Psoas muscle (tissue), 8 donors: ENCODE measurements at regions of chr3 and their contacts with region 1.

Region 1: GRCh38 chr3:4712143-4712542 is 219.0 kb downstream of the ITPR1 start:
- DNase-seq: no peak
- ATAC-seq: peak in 2 of 4 donors; percentile 7 to 36
- H3K4me3 ChIP-seq: no peak overlapping the region
- H3K27ac ChIP-seq: no peak overlapping the region
- H3K4me1 ChIP-seq: peaks cover 3% of the 10 kb centered on the region
- H3K27me3 ChIP-seq: no peaks in the 10 kb centered on the region
- CTCF ChIP-seq: no peak

Region 2: GRCh38 chr3:4978204-4978965 is 266.2 kb after region 1 on chr3:
- intact Hi-C with region 1: loop called in 1 of 2 experiments (anchors 2 kb)
- DNase-seq: peak; percentile 98
- ATAC-seq: peak; percentile 63 to 75 (median 70)
- H3K4me3 ChIP-seq: peak overlapping the region; percentile 99
- H3K27ac ChIP-seq: peak overlapping the region; percentile 100
- H3K4me1 ChIP-seq: peaks cover 17% of the 10 kb centered on the region
- H3K27me3 ChIP-seq: no peaks in the 10 kb centered on the region
- CTCF ChIP-seq: no peak

Region 3: DNA sequence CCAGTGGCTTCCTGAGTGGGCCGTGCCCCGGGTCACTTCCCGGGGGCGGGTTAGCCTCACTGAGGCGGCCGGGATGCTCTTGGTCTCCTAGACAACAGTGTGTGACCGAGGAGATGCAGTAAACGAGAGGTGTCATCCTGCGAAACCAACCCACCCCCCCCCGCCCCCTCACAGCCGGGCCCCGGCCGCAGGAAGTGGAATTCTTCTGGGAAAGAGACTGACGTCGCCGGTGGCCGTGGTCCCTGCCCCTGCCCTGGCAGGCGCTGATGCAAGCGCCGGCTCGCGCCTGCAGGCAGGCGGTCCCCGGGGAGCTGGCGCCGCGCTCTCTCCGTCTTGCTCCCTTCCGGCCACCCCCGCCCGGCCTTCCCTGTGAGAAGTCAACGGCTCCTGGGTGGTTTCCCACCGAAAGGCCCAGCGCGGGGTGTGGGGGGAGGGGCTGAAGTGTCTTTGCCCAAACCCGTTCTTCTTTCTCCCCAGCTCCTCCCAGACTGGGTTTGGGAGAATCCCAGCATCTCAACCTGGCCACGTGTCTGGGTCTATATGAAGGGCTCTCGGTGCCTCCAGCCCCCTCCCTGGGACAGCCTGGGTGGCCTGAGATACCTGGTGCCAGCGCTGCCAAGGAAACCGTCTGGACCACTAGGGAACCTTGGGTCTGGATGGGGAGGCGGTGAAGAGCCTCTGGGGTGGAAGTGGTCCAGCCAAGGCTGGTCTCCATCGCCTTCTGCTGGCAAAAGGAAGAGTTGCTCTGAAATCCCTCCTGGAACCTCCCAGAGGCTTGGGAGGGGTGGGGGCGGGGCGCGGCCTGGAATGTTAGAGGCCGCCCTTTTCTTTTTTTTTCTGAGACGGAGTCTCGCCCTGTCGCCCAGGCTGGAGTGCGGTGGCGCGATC is 314.4 kb after region 1 on chr3:
- intact Hi-C with region 1: loop called (anchors 5 to 10 kb)
- DNase-seq: peak; percentile 92 to 93
- ATAC-seq: peak; percentile 77 to 94 (median 82)
- H3K4me3 ChIP-seq: peak overlapping the region; percentile 63
- H3K27ac ChIP-seq: peak overlapping the region; percentile 80
- H3K4me1 ChIP-seq: peaks cover 6% of the 10 kb centered on the region
- H3K27me3 ChIP-seq: no peaks in the 10 kb centered on the region
- CTCF ChIP-seq: peak; percentile 57

Region 4: GRCh38 chr3:5057857-5058324 is 345.7 kb after region 1 on chr3:
- intact Hi-C with region 1: loop called (anchors 1 to 2 kb)
- DNase-seq: peak; percentile 63 to 77
- ATAC-seq: peak; percentile 69 to 81 (median 72)
- H3K4me3 ChIP-seq: no peak overlapping the region
- H3K27ac ChIP-seq: no peak overlapping the region
- H3K4me1 ChIP-seq: peaks cover 20% of the 10 kb centered on the region
- H3K27me3 ChIP-seq: no peaks in the 10 kb centered on the region
- CTCF ChIP-seq: peak; percentile 85

Region 5: GRCh38 chr3:5122030-5122740 is 410.0 kb after region 1 on chr3 and contains the start of gene ARL8B:
- intact Hi-C with region 1: loop called in 1 of 2 experiments (anchors 5 kb)
- DNase-seq: peak; percentile 94 to 96
- ATAC-seq: peak; percentile 92 to 97 (median 95)
- H3K4me3 ChIP-seq: peak within 1 kb of the TSS; percentile 92
- H3K27ac ChIP-seq: peak within 1 kb of the TSS; percentile 95
- H3K4me1 ChIP-seq: peaks cover 38% of the 10 kb centered on the region
- H3K27me3 ChIP-seq: no peaks in the 10 kb centered on the region
- CTCF ChIP-seq: peak; percentile 98
- total RNA-seq, gene ARL8B: 35.1 to 154 (median 109) TPM

Region 6: DNA sequence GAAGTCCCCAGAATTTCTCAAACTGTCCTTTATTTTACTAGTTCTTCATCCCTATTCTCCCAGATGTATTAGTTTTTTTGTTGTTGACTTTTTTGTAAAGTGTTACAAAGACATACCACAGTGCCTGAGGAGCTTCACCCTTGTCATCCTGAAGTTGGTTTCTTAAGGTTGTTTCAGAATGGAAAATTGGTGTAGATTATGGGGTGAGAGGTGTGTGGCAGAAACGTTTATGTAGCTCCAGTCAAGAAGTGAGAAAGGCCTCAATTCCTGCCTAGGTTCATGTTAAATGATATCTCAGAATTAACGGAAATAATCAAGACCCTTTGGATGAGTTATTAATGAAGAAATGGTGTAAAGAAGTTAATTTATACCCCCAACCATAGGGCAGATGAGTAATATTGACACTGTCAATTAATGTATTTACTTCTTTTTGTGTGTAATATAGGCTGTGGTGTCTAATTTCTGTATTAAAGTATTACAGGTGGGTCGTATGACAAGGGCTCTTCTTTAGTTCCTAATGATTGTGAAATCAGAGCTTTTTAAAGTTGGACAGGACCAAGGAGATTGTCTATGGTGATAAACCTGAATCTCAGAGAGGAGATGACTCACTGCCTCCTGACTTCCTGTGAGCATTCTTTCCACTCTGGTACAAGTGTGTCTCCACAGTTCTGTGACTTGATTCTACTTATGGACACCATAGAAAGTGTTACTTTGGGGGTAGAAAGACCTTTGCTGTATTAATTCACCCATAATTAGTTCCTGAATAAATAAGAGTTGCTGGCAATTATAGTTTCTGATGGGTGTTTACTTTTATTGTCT is 482.4 kb after region 1 on chr3:
- intact Hi-C with region 1: loop called in 1 of 2 experiments (anchors 10 kb)
- DNase-seq: no peak
- ATAC-seq: peak; percentile 89 to 96 (median 92)
- H3K4me3 ChIP-seq: no peak overlapping the region
- H3K27ac ChIP-seq: peak overlapping the region; percentile 71
- H3K4me1 ChIP-seq: peaks cover 58% of the 10 kb centered on the region
- H3K27me3 ChIP-seq: no peaks in the 10 kb centered on the region
- CTCF ChIP-seq: no peak